Head of caudate nucleus (tissue), 42 donors: ENCODE measurements at regions of chr2 and their contacts with region 1.

Region 1: DNA sequence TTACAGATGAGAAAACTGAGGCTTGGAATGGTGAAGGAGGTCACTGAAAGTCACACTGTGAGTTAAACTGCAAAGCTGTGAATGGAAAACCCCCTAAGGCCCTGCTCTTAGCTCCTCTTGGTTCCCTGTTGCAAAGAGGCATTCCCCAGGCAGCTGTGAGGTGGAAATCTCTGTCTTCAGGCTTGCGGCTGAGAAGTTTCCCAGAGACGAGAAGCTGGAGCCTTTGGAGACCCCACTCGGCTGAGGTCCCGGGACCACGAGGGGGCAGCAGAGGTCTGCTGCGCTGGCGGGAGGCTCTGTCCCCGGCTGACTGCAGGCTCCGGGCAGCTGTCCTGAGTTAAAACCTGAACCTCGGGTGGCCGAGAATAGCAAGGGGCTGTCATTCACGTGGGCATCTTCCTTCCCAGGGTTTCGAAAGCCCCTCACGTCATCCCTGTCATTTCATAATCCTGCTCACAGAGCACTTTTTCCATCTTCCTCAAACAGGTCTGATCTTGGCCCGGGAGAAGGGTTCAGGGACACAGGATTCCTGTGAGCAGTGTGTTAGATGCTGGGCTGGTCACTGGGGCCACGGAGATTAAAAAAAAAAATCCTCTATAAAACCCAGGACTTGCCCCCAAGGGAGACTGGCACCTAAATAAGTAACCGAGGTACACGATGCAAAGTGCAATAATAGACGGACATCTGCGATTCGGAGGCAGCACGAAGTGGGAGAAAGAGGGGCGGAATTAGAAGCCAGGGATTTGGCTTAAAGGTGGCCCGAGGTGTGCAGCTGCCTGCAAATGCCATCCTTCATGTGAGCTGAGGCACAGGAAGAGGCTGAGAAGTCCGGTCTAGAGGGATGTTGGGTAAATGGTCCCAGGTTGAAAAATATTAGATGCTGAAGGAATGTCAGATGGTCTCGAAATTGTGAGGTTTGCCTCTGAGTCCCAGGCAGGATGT is 24.6 kb upstream of the ATOH8 start:
- DNase-seq: peak; percentile 84 to 97 (median 92)

Region 2: GRCh38 chr2:85813982-85814801 is 85.0 kb after region 1 on chr2:
- intact Hi-C with region 1: loop called (anchors 5 kb)
- DNase-seq: peak; percentile 84 to 98 (median 95)

Region 3: DNA sequence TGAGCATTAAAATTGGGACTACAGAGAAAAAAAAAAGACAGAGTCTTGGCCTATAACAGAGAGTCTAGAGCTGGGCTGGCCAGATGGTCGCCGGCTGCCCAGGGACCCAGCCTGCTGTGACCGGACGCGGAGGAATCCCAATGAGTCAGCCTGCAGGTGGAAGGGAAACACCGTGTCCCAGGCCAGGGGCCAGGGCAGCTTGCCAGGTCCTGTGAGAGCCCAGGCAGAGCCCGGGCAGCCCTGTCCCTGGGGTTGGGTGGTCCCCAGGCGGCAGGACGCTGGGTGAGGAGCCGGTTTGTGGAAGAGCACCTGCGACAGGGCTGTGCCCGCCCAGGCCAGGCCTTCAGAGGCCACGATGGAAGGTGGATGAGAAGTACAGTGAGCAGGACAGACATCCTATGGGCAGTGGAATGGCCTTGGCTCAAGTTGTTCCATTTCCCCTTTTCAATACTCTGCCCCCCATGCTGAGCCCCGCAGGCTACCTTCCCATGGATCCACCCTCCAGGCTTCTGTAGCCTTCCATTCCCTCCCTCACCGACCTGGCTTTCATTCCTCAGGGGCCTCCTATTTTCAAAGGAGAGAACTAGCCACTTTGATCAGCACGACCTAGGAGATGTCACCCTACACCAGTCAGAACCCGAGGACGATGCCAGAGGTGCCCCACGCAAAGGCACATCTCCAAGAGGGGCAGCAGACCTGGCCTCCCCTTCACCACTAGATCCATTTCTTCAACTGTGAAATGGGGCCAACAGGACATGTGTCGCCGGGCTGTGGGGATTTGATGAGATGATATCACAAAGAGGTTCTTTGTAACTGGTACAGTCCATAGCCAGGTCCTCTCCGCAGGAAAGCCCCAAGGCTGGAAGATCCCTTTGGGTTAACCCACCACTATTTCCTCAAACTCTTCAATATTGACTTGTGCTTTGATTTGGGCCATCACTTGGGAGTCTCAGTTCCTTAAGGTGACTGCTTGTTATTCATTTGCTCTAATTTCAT is 289.0 kb after region 1 on chr2:
- intact Hi-C with region 1: no loop called
- DNase-seq: peak in 19 of 42 donors; percentile 10 to 70 (median 35)

Region 4: GRCh38 chr2:86079981-86080911 is 351.1 kb after region 1 on chr2:
- intact Hi-C with region 1: loop called (anchors 10 kb)
- DNase-seq: peak; percentile 43 to 92 (median 82)